Transverse colon (tissue), 4 donors: ENCODE measurements at regions of chr18 and their contacts with region 1.

Region 1: GRCh38 chr18:24488824-24489493 is 28.5 kb downstream of the HRH4 start:
- DNase-seq: no peak
- H3K4me3 ChIP-seq: no peak overlapping the region
- H3K27ac ChIP-seq: no peak overlapping the region
- H3K4me1 ChIP-seq: peaks cover 0 to 5% (median 0%) of the 10 kb centered on the region in 4 donors
- H3K27me3 ChIP-seq: no peaks in the 10 kb centered on the region
- CTCF ChIP-seq: peak; percentile 75 to 86 (median 83)
- EP300 ChIP-seq: no peak
- POLR2A ChIP-seq: no peak

Region 2: GRCh38 chr18:24176727-24177416 is 312.1 kb before region 1 on chr18:
- in situ Hi-C with region 1: loop called in 2 of 4 experiments (anchors 25 kb)
- intact Hi-C with region 1: no loop called
- DNase-seq: peak; percentile 71
- H3K4me3 ChIP-seq: no peak overlapping the region
- H3K27ac ChIP-seq: no peak overlapping the region
- H3K4me1 ChIP-seq: peaks cover 0 to 9% (median 0%) of the 10 kb centered on the region in 4 donors
- H3K27me3 ChIP-seq: no peaks in the 10 kb centered on the region
- CTCF ChIP-seq: peak; percentile 62 to 75 (median 70)
- EP300 ChIP-seq: no peak
- POLR2A ChIP-seq: no peak

Region 3: GRCh38 chr18:24362758-24363157 is 126.2 kb before region 1 on chr18:
- in situ Hi-C with region 1: loop called (anchors 5 to 25 kb)
- intact Hi-C with region 1: loop called (anchors 5 kb)
- DNase-seq: no peak
- H3K4me3 ChIP-seq: no peak overlapping the region
- H3K27ac ChIP-seq: no peak overlapping the region
- H3K4me1 ChIP-seq: peaks cover 0 to 6% (median 0%) of the 10 kb centered on the region in 4 donors
- H3K27me3 ChIP-seq: no peaks in the 10 kb centered on the region
- CTCF ChIP-seq: no peak
- EP300 ChIP-seq: no peak
- POLR2A ChIP-seq: no peak

Region 4: GRCh38 chr18:24368749-24369148 is 120.2 kb before region 1 on chr18:
- in situ Hi-C with region 1: loop called (anchors 5 to 25 kb)
- intact Hi-C with region 1: loop called (anchors 5 kb)
- DNase-seq: no peak
- H3K4me3 ChIP-seq: no peak overlapping the region
- H3K27ac ChIP-seq: no peak overlapping the region
- H3K4me1 ChIP-seq: no peaks in the 10 kb centered on the region
- H3K27me3 ChIP-seq: no peaks in the 10 kb centered on the region
- CTCF ChIP-seq: no peak
- EP300 ChIP-seq: no peak
- POLR2A ChIP-seq: no peak

Region 5: GRCh38 chr18:24726727-24727492 is 238.0 kb after region 1 on chr18:
- in situ Hi-C with region 1: loop called in 2 of 4 experiments (anchors 10 kb)
- intact Hi-C with region 1: no loop called
- DNase-seq: peak; percentile 78
- H3K4me3 ChIP-seq: peak overlapping the region in 2 of 4 donors; percentile 25 to 27
- H3K27ac ChIP-seq: peak overlapping the region in 1 of 4 donors; percentile 43
- H3K4me1 ChIP-seq: peaks cover 0 to 17% (median 6%) of the 10 kb centered on the region in 4 donors
- H3K27me3 ChIP-seq: peaks cover 19% of the 10 kb centered on the region
- CTCF ChIP-seq: peak; percentile 71 to 82 (median 79)
- EP300 ChIP-seq: no peak
- POLR2A ChIP-seq: no peak

Region 6: GRCh38 chr18:24734058-24734457 is 245.1 kb after region 1 on chr18:
- in situ Hi-C with region 1: loop called in 2 of 4 experiments (anchors 10 kb)
- intact Hi-C with region 1: no loop called
- DNase-seq: no peak
- H3K4me3 ChIP-seq: no peak overlapping the region
- H3K27ac ChIP-seq: no peak overlapping the region
- H3K4me1 ChIP-seq: peaks cover 0 to 11% (median 3%) of the 10 kb centered on the region in 4 donors
- H3K27me3 ChIP-seq: no peaks in the 10 kb centered on the region
- CTCF ChIP-seq: peak in 1 of 5 experiments; percentile 6
- EP300 ChIP-seq: no peak
- POLR2A ChIP-seq: no peak